ENCODE measurements at regions of chr19 and their contacts with region 1.

Region 1: GRCh38 chr19:1568320-1569019 is at the start of gene MEX3D:
- DNase-seq: peak; percentile 49
- ATAC-seq: peak; percentile 74
- H3K4me3 ChIP-seq: peak within 1 kb of the TSS; percentile 97
- H3K27ac ChIP-seq: peak within 1 kb of the TSS; percentile 95
- H3K4me1 ChIP-seq: peaks cover 8% of the 10 kb centered on the region
- H3K27me3 ChIP-seq: no peaks in the 10 kb centered on the region; the same call in 1 of the 2 replicates
- CTCF ChIP-seq: no peak
- POLR2A ChIP-seq: no peak
- RAD21 ChIP-seq: no peak
- total RNA-seq, gene MEX3D: 9.1 and 11.9 TPM in 2 replicates

Region 2: DNA sequence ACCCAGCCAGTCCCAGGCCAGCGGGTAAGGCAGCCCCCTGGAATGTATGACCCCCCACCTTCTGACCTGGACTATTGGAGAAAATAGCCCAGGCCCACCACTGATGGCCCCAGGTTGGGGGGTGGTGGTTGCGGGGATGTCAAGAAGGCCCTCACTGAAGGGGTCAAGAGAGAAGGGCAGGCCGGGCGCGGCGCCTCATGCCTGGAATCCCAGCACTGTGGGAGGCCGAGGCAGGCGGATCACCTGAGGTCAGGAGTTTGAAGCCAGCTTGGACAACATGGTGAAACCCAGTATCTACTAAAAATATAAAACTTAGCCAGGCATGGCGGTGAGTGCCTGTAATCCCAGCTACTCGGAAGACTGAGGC is 54.2 kb before region 1 on chr19:
- CTCF ChIA-PET with region 1: interaction called, 11 read pairs
- POLR2A ChIA-PET with region 1: no interaction called
- dilution Hi-C with region 1: no loop called
- in situ Hi-C with region 1: no loop called
- intact Hi-C with region 1: no loop called
- DNase-seq: no peak
- ATAC-seq: no peak
- H3K4me3 ChIP-seq: no peak overlapping the region
- H3K27ac ChIP-seq: no peak overlapping the region
- H3K4me1 ChIP-seq: peaks cover 4% of the 10 kb centered on the region; the same call in 1 of the 2 replicates
- H3K27me3 ChIP-seq: no peaks in the 10 kb centered on the region; the same call in 1 of the 2 replicates
- CTCF ChIP-seq: no peak
- POLR2A ChIP-seq: no peak
- RAD21 ChIP-seq: no peak

Region 3: DNA sequence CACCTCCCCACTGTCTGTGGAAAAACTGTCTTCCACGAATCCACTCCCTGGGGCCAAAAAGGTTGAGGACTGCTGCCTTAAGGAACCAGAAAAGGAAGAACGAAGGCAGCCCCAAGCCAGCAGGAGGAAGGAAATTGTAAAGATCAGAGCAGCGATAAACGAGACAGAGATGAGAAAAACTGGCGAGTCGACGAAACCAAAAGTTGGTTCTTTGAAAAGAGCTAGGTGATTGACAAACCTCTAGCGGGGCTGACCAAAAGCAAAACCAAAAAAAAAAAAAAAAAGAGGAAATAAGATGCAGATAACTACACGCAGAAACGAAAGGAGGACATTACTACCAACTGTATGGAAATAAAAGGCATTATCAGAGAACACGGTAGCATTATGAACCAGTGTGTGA is 984.4 kb after region 1 on chr19:
- CTCF ChIA-PET with region 1: no interaction called
- POLR2A ChIA-PET with region 1: no interaction called
- dilution Hi-C with region 1: no loop called
- in situ Hi-C with region 1: no loop called
- intact Hi-C with region 1: loop called (anchors 10 kb)
- DNase-seq: no peak
- ATAC-seq: no peak
- H3K4me3 ChIP-seq: no peak overlapping the region
- H3K27ac ChIP-seq: no peak overlapping the region
- H3K4me1 ChIP-seq: peaks cover 3% of the 10 kb centered on the region
- H3K27me3 ChIP-seq: no peaks in the 10 kb centered on the region
- CTCF ChIP-seq: no peak
- POLR2A ChIP-seq: no peak
- RAD21 ChIP-seq: no peak